ENCODE measurements at regions of chr14 and their contacts with region 1.

Region 1: DNA sequence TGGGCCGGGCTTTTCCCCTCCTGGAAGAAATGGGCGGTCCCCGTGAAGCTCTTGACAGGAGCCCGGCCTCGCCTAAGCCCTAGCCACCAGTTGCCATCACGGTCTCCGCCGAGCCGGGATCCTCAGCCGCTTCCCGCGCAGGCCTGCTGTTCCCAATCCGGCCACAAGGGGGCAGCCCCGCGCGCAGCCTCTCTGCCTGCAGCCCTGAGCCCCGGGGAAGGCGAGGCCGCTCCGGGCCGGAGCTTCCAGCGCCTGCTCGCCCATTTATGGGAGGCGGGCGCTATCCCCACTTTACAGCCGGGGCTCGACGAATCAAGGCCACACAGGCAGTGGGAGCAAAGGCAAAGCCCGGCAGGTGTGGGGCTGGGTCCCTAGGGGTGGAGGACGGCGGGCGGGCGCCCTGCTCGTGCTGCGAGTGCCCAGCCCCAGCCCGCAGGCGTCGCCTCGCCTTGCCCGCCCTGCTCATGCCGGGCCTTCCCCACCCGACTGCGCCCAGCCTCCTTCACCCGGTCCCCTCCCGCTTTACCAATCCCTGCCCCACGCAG is 61.5 kb downstream of the LGMN start:
- DNase-seq: peak; percentile 97
- H3K4me3 ChIP-seq: peak overlapping the region in 1 of 2 experiments; percentile 31; a peak in 2 of 4 replicates
- H3K27ac ChIP-seq: no peak overlapping the region
- H3K4me1 ChIP-seq: peaks cover 0 to 12% of the 10 kb centered on the region in 2 experiments; a peak in 1 of 4 replicates
- H3K27me3 ChIP-seq: no peaks in the 10 kb centered on the region
- CTCF ChIP-seq: peak; percentile 87
- EP300 ChIP-seq: no peak
- RAD21 ChIP-seq: peak; percentile 69

Region 2: DNA sequence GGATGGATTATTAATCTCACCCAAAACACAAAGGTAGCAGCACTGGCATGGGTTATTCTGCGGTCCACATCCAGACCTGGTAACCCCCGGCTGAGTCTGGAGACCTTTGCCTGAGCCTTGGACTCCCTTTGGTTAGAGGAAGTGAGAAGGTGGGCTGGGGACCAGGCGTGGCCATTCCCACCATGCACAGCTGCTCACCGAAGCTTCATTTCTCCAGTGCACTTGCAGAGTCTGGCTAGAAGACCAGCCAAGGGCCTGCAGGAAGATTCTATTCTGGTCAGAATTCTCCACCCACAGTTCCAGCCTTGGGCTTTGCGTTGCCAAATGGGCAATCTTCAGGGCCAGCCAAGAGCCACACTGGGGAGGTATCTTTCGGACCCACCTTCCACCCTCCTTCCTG is 11.6 kb before region 1 on chr14:
- CTCF ChIA-PET with region 1: interaction called, 30 read pairs
- POLR2A ChIA-PET with region 1: no interaction called
- DNase-seq: no peak
- H3K4me3 ChIP-seq: no peak overlapping the region
- H3K27ac ChIP-seq: no peak overlapping the region
- H3K4me1 ChIP-seq: no peaks in the 10 kb centered on the region
- H3K27me3 ChIP-seq: no peaks in the 10 kb centered on the region
- CTCF ChIP-seq: no peak
- EP300 ChIP-seq: no peak
- RAD21 ChIP-seq: no peak

Region 3: DNA sequence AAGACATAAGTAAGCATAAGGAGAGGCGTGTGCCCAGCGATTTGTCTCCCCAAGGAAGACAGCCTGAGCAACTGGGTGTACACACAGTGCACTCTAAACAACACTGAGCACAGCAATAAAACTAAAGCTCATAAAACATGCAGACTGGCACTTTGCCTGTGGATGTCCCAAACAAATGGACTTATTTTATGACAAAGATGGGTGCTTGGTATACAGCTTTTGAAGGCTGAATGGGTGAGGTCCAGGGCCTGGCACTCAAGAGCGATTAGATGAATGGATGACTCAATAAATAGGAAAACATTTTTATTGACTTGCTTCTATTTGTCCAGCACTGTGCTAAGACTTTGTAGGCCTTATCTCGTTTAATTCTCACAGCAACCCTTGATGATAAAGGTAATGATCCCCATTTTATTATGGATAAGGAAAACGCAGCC is 32.9 kb after region 1 on chr14:
- CTCF ChIA-PET with region 1: interaction called, 10 read pairs
- POLR2A ChIA-PET with region 1: no interaction called
- DNase-seq: no peak
- H3K4me3 ChIP-seq: no peak overlapping the region
- H3K27ac ChIP-seq: no peak overlapping the region
- H3K4me1 ChIP-seq: no peaks in the 10 kb centered on the region
- H3K27me3 ChIP-seq: no peaks in the 10 kb centered on the region
- CTCF ChIP-seq: no peak
- EP300 ChIP-seq: no peak
- RAD21 ChIP-seq: no peak

Region 4: DNA sequence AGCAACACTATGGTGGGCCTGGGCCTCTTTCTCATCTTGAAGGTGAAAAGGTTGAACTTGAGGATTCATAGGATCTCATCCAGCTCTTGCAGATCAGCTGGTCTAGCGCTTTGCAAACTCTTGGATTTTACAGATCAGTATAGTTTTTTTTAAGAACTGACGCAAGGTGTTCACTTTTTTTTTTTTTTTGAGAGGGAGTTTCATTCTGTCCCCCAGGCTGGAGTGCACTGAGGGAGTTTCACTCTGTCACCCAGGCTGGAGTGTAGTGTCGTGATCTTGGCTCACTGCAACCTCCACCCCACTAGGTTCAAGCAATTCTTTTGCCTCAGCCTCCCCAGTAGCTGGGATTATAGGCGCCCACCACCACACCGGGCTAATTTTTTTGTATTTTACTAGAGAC is 81.8 kb after region 1 on chr14:
- CTCF ChIA-PET with region 1: interaction called, 13 read pairs
- POLR2A ChIA-PET with region 1: no interaction called
- DNase-seq: no peak
- H3K4me3 ChIP-seq: no peak overlapping the region
- H3K27ac ChIP-seq: no peak overlapping the region
- H3K4me1 ChIP-seq: no peaks in the 10 kb centered on the region
- H3K27me3 ChIP-seq: no peaks in the 10 kb centered on the region
- CTCF ChIP-seq: no peak
- EP300 ChIP-seq: no peak
- RAD21 ChIP-seq: no peak

Region 5: DNA sequence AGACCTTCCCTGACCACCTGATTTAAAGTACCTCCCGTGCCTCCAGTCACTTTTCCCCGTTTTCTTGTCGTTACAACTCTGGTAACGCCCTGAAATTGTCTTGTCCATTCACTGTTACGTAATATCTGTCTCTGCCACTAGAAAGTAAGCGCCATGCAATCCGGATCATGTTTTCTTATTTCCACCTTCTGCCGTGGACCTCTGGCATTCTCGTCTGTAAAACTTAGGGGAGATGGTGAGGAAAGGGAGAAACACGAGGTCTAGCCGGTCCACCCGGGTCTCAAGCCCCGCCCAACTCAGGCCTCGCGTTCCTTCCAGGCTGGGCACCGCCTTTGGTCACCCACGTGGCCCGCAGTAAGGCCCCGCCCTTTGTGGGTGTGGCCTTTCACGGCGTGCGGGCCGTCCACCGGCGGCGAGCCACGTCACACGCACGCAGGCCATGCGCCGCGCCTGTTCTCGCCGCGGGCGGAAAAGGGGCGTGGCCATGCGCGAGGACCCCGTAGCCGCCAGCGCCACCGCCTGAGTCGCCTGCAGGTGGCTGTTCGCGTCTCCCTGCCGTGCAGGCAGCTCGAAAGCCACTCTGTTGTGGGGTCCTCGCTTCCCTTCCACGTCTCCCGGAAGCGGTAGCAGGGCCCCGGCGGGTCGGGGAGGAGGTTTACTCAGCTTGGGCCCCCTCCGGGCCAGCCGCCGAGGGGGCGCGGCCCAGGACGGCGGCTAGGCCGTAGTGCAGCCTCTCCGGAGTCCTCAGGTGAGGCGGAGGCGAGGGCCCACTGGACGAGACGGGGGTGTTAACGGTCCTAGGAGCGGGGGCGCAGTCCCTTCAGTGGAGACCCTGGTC is 107.0 kb after region 1 on chr14 and contains the start of gene GOLGA5:
- CTCF ChIA-PET with region 1: interaction called, 186 read pairs
- POLR2A ChIA-PET with region 1: no interaction called
- DNase-seq: peak; percentile 95
- H3K4me3 ChIP-seq: peak within 1 kb of the TSS; percentile 83 to 99
- H3K27ac ChIP-seq: peak within 1 kb of the TSS; percentile 82 to 87
- H3K4me1 ChIP-seq: peaks cover 0 to 8% of the 10 kb centered on the region in 2 experiments; a peak in 2 of 4 replicates
- H3K27me3 ChIP-seq: no peaks in the 10 kb centered on the region
- CTCF ChIP-seq: no peak
- EP300 ChIP-seq: no peak
- RAD21 ChIP-seq: no peak
- polyA plus RNA-seq, gene GOLGA5: 25.6 and 29.1 TPM in 2 replicates

Measured in SK-N-SH (cell line).